Endothelial cell of umbilical vein (primary cell): ENCODE measurements at regions of chr2 and their contacts with region 1.

Region 1: GRCh38 chr2:157194097-157194688 is 63.3 kb upstream of the GALNT5 start:
- DNase-seq: peak; percentile 78
- H3K4me3 ChIP-seq: no peak overlapping the region
- H3K27ac ChIP-seq: peak overlapping the region; percentile 21
- H3K4me1 ChIP-seq: peaks cover 18% of the 10 kb centered on the region
- H3K27me3 ChIP-seq: no peaks in the 10 kb centered on the region
- CTCF ChIP-seq: peak; percentile 45 to 59
- POLR2A ChIP-seq: no peak

Region 2: GRCh38 chr2:155815886-155816285 is 1378.3 kb before region 1 on chr2:
- CTCF ChIA-PET with region 1: interaction called, 5 read pairs
- POLR2A ChIA-PET with region 1: no interaction called
- dilution Hi-C with region 1: no loop called
- intact Hi-C with region 1: loop called (anchors 10 kb)
- DNase-seq: peak; percentile 67
- H3K4me3 ChIP-seq: no peak overlapping the region
- H3K27ac ChIP-seq: no peak overlapping the region
- H3K4me1 ChIP-seq: no peaks in the 10 kb centered on the region
- H3K27me3 ChIP-seq: no peaks in the 10 kb centered on the region
- CTCF ChIP-seq: peak; percentile 45 to 69
- POLR2A ChIP-seq: no peak

Region 3: DNA sequence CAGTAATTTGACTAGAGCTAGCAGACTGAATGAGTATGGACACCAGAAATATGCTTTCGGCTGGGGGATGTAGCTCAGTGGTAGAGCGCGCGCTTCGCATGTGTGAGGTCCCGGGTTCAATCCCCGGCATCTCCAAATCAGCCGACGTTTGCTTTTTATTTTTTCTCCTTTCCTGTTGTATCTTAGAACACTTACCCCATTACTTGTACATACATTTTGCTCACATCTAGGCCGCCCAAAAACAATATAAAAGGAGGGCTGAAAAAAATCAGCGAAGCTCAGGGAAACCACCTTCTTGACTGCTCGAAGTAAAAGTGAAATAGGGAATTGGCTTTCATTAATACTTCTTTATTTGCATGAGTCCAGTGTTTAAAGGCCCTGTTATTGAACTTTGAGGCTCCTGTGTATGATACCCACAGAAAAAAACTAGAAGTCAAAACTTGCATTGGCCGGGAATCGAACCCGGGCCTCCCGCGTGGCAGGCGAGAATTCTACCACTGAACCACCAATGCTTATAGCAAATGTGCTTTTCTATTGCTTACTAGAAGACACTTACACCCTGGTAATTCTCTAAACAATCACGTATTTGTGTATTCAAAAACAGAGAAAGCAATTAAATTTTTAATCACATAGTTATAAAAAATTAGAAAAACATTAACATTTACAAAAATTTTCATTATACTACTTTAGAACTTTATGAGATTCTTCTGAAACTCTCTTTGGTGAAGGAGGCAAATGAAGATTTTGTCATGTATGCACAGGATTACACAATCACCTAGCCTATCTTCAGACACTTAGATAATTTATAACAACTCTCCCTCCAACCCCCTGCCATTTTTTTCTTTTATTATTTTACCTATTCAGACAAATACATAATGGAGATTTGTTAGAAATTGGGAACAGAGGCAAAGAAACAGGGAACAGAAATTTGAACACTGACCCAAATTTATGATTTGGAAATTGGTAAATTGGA is 793.2 kb before region 1 on chr2:
- CTCF ChIA-PET with region 1: interaction called, 6 read pairs
- POLR2A ChIA-PET with region 1: no interaction called
- dilution Hi-C with region 1: no loop called
- intact Hi-C with region 1: loop called (anchors 2 kb)
- DNase-seq: peak; percentile 91
- H3K4me3 ChIP-seq: peak overlapping the region; percentile 48 to 71 (median 49)
- H3K27ac ChIP-seq: peak overlapping the region; percentile 41
- H3K4me1 ChIP-seq: peaks cover 5% of the 10 kb centered on the region
- H3K27me3 ChIP-seq: peaks cover 0 to 5% of the 10 kb centered on the region in 2 experiments
- CTCF ChIP-seq: no peak
- POLR2A ChIP-seq: no peak

Region 4: DNA sequence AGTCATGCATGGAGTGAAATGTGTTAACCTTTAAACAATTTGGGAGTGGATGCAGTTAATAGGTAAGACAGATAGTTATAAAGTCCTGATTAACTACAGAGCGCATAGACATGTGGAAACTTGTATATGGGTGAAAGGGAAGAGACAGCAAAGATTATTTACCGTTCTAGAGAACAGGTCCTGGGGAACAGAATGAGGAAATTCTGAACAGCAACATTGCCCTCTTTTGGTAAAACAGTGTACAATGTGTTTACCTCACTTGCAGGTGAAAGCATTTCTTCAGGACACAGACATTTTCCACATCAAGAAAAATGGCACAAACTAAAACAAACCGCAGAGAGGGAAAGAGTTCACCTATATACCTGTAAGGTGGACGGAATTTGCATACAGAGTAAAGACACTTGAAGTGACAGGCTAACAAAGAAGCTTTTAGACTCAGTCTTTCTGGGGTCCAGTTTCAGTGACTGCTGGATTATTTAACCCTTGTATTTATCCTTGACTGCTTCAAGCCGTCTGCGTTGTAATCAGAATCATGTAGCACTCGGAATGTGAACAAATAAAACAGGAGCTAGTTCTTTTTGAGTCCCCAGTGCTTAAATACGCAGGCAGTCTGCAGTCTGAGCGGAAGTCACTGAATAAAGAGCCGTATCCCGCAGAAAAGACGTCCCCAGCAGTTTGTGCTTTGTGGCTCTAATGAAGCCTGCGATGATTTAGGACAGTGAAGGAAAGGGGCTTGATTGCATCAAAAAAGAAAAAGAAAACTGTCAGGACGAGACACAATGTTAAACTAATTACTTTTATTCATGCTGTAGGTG is 301.5 kb before region 1 on chr2:
- CTCF ChIA-PET with region 1: interaction called, 8 read pairs
- POLR2A ChIA-PET with region 1: no interaction called
- dilution Hi-C with region 1: no loop called
- intact Hi-C with region 1: loop called (anchors 1 kb)
- DNase-seq: peak; percentile 46
- H3K4me3 ChIP-seq: peak overlapping the region in 1 of 3 experiments; percentile 56
- H3K27ac ChIP-seq: no peak overlapping the region
- H3K4me1 ChIP-seq: peaks cover 9% of the 10 kb centered on the region
- H3K27me3 ChIP-seq: peaks cover 14 to 35% of the 10 kb centered on the region in 2 experiments
- CTCF ChIP-seq: peak in 1 of 2 donors; percentile 5
- POLR2A ChIP-seq: no peak

Region 5: GRCh38 chr2:157173740-157174184 is 20.4 kb before region 1 on chr2:
- CTCF ChIA-PET with region 1: interaction called, 43 read pairs
- POLR2A ChIA-PET with region 1: no interaction called
- dilution Hi-C with region 1: no loop called
- intact Hi-C with region 1: no loop called
- DNase-seq: peak; percentile 93
- H3K4me3 ChIP-seq: no peak overlapping the region
- H3K27ac ChIP-seq: peak overlapping the region; percentile 78
- H3K4me1 ChIP-seq: peaks cover 18% of the 10 kb centered on the region
- H3K27me3 ChIP-seq: no peaks in the 10 kb centered on the region
- CTCF ChIP-seq: no peak
- POLR2A ChIP-seq: no peak

Region 6: GRCh38 chr2:157302492-157303099 is 108.4 kb after region 1 on chr2:
- CTCF ChIA-PET with region 1: no interaction called
- POLR2A ChIA-PET with region 1: no interaction called
- dilution Hi-C with region 1: no loop called
- intact Hi-C with region 1: no loop called
- DNase-seq: peak; percentile 58
- H3K4me3 ChIP-seq: no peak overlapping the region
- H3K27ac ChIP-seq: no peak overlapping the region
- H3K4me1 ChIP-seq: no peaks in the 10 kb centered on the region
- H3K27me3 ChIP-seq: peaks cover 0 to 2% of the 10 kb centered on the region in 2 experiments
- CTCF ChIP-seq: peak; percentile 62 to 64
- POLR2A ChIP-seq: no peak